Posterior vena cava (tissue), 2 donors: ENCODE measurements at regions of chr4 and their contacts with region 1.

Region 1: DNA sequence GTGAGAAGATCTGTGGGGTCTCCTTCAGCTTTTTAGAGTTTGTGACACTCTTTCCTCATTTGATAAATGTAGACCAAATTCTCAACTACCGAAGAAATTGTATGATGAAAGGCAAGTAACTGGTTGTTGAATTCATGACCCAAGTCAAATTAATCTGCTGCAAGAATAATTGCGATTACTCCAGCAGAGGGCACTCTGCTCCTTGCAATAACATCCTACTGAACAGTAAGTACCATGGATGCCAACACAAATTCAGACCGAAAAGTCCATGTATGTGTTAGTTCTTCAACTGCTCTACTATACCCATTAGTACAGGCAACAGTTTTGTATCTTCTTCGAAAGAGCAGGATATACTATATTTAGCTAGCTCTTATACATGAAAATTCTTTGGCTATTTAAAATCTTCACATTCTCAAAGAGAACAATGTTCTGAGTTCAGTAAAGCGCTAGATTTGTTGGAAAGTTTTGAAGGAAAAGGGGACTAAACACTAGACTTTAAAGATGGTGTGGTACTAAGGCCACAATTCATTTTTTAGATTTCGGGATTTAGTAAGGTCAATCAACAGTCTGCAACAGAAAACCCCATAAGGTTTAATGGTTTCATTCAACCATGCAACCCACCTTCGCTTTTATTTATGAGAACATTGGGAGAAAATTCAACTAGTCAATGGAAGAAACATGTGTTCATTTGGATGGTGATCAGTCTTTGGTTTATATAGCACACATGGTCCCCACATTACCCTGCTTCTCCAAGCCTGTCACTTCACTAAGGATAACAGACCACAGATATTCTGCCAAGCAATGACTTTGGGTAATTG is 105.4 kb upstream of the TBC1D9 start:
- DNase-seq: no peak

Region 2: GRCh38 chr4:140351093-140352075 is 510.2 kb before region 1 on chr4:
- intact Hi-C with region 1: no loop called
- DNase-seq: peak; percentile 70

Region 3: GRCh38 chr4:140691357-140691756 is 170.2 kb before region 1 on chr4:
- intact Hi-C with region 1: no loop called
- DNase-seq: no peak

Region 4: GRCh38 chr4:141133146-141133998 is 271.8 kb after region 1 on chr4 and contains the start of gene RNF150:
- intact Hi-C with region 1: loop called (anchors 2 to 5 kb)
- DNase-seq: peak; percentile 88
- total RNA-seq, gene RNF150: 23.6 to 26.6 TPM